Heart right ventricle (tissue), 16 donors: ENCODE measurements at regions of chr4 and their contacts with region 1.

Region 1: GRCh38 chr4:73662709-73663546 is 42.7 kb upstream of the RASSF6 start:
- DNase-seq: no peak
- ATAC-seq: peak in 6 of 8 donors; percentile 57 to 70 (median 66)
- H3K4me3 ChIP-seq: no peak overlapping the region
- H3K27ac ChIP-seq: peak overlapping the region in 1 of 10 donors; percentile 36
- H3K4me1 ChIP-seq: peaks cover 0 to 23% (median 0%) of the 10 kb centered on the region in 9 donors
- H3K27me3 ChIP-seq: no peaks in the 10 kb centered on the region
- CTCF ChIP-seq: peak in 7 of 9 donors; percentile 47 to 65 (median 56)

Region 2: GRCh38 chr4:73761856-73762255 is 98.9 kb after region 1 on chr4:
- intact Hi-C with region 1: no loop called
- DNase-seq: no peak
- ATAC-seq: no peak
- H3K4me3 ChIP-seq: no peak overlapping the region
- H3K27ac ChIP-seq: no peak overlapping the region
- H3K4me1 ChIP-seq: peaks cover 0 to 21% (median 0%) of the 10 kb centered on the region in 9 donors
- H3K27me3 ChIP-seq: no peaks in the 10 kb centered on the region
- CTCF ChIP-seq: no peak

Region 3: DNA sequence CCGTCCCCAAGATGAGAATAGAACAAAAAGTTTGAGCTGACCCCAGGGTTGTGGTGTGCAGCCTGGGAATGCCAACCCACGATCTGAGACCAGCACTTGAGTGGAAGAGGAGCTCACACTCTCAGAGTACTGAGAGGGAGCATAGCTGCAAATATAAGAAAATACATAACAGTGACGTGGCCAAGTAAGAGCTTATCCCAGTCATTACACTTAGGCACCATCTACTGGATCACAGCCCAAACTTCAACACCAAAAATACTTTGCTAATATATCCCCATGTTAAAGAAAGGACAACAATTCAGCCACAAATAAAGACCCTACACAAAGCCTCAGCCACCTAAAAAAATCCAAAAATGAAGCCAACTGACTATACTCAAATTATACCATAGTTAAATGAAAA is 140.3 kb after region 1 on chr4:
- intact Hi-C with region 1: no loop called
- DNase-seq: no peak
- ATAC-seq: no peak
- H3K4me3 ChIP-seq: no peak overlapping the region
- H3K27ac ChIP-seq: no peak overlapping the region
- H3K4me1 ChIP-seq: no peaks in the 10 kb centered on the region
- H3K27me3 ChIP-seq: no peaks in the 10 kb centered on the region
- CTCF ChIP-seq: no peak

Region 4: DNA sequence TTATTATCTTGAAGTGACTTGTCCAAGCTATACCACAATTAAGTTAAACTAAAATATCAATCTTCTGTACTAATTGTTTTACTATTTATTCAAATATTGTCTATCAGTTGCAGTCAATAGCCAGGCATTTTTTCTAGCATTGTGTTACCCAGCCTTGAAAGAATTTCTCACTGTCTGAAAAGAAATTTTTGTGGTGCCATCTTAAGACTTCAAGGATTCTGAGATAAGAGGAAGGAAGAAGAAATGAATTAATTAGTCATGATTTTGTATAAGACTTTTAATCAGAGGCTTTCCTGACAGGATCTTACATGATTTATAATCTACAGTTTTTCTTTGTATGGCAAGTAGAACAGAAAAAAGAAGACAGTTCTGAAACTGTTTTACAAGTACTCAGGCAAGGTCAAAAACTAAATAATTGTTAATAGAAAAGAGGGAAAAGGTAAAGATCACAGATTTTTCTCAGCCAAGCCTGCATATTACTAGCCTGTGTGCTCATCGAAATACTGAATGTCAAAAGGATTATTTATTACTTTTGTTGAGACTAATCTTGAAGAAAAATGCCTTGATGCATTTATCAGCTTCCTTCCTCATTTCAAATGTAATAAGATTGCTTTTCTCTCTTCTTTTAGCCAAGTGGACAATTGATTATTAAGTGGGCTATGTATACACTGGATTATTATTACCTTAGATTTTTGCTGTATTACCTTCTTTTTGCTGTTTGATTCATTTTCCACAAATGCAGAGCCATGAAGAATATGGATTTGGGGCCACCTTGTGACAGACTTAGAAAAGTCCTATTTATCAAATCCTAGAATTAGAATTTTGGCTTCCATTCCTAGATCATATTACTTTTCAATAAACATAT is 260.1 kb after region 1 on chr4:
- intact Hi-C with region 1: loop called in 7 of 10 experiments (anchors 2 to 10 kb)
- DNase-seq: no peak
- ATAC-seq: no peak
- H3K4me3 ChIP-seq: no peak overlapping the region
- H3K27ac ChIP-seq: no peak overlapping the region
- H3K4me1 ChIP-seq: peaks cover 0 to 7% (median 0%) of the 10 kb centered on the region in 9 donors
- H3K27me3 ChIP-seq: peaks cover 0 to 8% (median 0%) of the 10 kb centered on the region in 7 donors
- CTCF ChIP-seq: peak in 8 of 9 donors; percentile 26 to 60 (median 47)

Region 5: GRCh38 chr4:73929278-73929677 is 266.4 kb after region 1 on chr4:
- intact Hi-C with region 1: loop called in 5 of 10 experiments (anchors 5 to 10 kb)
- DNase-seq: no peak
- ATAC-seq: no peak
- H3K4me3 ChIP-seq: no peak overlapping the region
- H3K27ac ChIP-seq: no peak overlapping the region
- H3K4me1 ChIP-seq: no peaks in the 10 kb centered on the region
- H3K27me3 ChIP-seq: peaks cover 0 to 6% (median 0%) of the 10 kb centered on the region in 7 donors
- CTCF ChIP-seq: no peak